Spleen (tissue), 13 donors: ENCODE measurements at regions of chr14 and their contacts with region 1.

Region 1: DNA sequence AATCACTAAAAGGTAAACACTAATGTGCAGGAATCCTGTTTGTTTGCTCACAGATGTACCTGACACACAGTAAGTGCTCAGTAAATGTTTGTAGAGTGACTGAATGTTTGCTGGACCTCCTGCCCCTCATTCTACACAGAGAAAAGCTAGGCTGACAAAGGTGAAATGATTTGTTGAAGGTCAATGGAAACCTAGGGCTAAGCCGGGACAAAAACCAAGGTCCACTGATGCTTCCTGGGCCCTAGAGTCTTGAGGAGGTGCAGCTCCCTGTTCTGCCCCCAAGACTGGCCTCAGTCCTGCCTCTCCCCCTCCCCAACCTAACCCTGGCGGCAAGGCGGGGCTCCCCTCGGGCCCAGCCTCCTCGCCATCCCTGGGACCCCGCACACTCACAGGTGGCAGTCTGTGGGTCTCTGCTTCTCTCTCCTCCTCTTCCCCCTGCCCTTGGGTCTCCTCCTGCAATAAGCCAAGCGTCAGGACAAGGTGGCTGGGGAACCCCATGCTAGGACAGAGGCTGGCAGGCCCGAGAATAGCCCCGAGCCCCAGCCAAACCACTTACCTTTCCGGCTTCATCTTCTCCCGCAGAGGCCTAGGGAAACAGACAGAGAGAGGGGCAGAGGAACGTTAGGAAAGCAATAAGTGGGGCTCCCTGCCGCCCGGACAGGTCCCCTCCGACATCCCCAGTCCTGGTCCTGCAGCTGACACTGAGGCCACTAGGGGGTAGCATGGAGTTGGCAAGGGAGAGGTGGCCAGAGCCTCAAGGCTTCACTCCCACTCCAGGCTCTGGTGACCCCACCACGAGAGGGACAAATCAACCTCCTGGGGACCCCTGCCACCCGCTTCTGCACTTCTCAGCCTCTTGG is 9.3 kb downstream of the PGF start:
- DNase-seq: peak; percentile 91
- H3K4me3 ChIP-seq: peak overlapping the region in 1 of 8 donors; percentile 26
- H3K27ac ChIP-seq: peak overlapping the region in 1 of 8 donors; percentile 4
- H3K4me1 ChIP-seq: peaks cover 16 to 43% (median 34%) of the 10 kb centered on the region in 6 donors
- H3K27me3 ChIP-seq: peaks cover 0 to 13% (median 0%) of the 10 kb centered on the region in 7 donors
- CTCF ChIP-seq: peak; percentile 75 to 97 (median 91)
- POLR2A ChIP-seq: no peak

Region 2: DNA sequence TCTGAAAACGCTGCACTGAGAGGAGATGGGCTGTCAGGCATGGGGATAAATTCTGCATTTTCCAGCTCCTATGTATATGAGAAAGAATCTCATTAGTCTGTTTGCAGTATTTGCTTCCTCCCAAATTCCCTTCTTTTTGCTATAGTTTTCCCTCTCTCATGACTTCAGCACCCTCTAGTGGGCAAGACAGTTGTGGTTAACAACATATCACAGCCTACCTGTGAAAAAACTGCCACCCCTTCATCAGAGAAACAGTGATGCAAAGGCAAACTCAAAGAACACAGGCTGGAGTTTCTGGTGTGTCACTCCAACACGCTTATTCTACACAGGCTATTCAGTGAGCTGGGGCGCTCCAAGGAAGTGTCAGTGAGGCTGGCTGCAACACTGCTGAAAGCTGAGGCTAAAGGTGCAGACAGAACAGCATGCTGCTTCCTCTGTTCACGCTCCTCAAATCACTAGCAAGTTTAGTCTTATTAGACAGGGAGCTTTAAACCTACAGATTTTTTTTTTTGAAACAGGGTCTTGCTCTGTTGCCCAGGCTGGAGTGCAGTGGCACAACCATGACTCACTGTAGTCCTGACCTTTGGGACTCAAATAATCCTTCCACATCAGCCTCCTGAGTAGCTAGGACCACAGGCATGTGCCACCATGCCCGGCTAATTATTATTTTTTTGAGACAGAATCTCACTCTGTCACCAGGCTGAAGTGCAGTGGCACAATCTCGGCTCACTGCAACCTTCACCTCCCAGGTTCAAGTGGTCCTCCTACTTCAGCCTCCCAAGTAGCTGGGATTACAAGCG is 142.7 kb after region 1 on chr14:
- intact Hi-C with region 1: loop called (anchors 10 kb)
- DNase-seq: no peak
- H3K4me3 ChIP-seq: no peak overlapping the region
- H3K27ac ChIP-seq: no peak overlapping the region
- H3K4me1 ChIP-seq: no peaks in the 10 kb centered on the region
- H3K27me3 ChIP-seq: no peaks in the 10 kb centered on the region
- CTCF ChIP-seq: peak in 10 of 11 experiments; percentile 25 to 82 (median 64)
- POLR2A ChIP-seq: no peak